ENCODE measurements at regions of chr9 and their contacts with region 1.

Region 1: GRCh38 chr9:32384364-32385151 is at the start of gene ACO1:
- DNase-seq: no peak
- H3K4me3 ChIP-seq: peak within 1 kb of the TSS; percentile 87
- H3K27me3 ChIP-seq: no peaks in the 10 kb centered on the region; the same call in 1 of the 2 replicates
- CTCF ChIP-seq: peak; percentile 14; the same call in 1 of the 2 replicates
- polyA plus RNA-seq, gene ACO1: 93.8 and 111 TPM in 2 replicates

Region 2: DNA sequence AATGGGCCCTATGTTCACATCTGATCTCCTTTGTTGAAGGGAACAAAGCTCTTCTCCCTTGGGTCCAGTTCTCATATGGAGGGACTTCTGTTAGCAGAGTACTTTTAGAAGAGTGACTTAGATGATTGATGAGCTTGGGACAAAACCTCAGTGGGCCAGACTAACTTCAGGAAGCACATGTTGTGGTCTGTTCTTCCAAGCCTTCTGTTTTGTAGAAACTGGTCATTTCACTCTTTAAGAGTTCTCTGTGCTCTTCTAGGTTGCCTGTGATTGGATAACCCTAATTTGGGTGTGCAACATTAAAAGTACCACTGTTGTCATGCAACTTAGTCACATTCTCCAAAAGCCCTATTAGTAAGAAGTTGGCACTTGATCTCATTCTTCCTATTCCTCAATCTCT is 183.7 kb before region 1 on chr9:
- CTCF ChIA-PET with region 1: no interaction called
- POLR2A ChIA-PET with region 1: no interaction called
- DNase-seq: no peak
- H3K4me3 ChIP-seq: no peak overlapping the region
- H3K27me3 ChIP-seq: no peaks in the 10 kb centered on the region
- CTCF ChIP-seq: no peak

Region 3: DNA sequence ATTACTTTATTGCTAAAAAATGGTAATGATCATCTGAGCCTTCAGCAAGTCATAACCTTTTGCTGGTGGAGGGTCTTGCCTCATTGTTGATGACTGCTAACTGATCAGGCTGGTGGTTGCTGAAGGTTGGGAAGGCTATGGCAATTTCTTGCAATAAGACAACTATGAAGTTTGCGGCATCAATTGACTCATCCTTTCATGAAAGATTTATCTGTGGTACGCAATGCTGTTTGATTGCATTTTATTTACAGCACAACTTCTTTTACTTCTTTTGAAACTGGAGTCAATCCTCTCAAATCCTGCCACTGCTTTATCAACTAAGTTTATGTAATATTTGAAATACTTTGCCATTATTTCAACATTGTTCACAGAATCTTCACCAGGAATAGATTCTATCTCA is 58.4 kb before region 1 on chr9:
- CTCF ChIA-PET with region 1: no interaction called
- POLR2A ChIA-PET with region 1: no interaction called
- DNase-seq: no peak
- H3K4me3 ChIP-seq: no peak overlapping the region
- H3K27me3 ChIP-seq: no peaks in the 10 kb centered on the region
- CTCF ChIP-seq: no peak

Region 4: GRCh38 chr9:32395490-32396216 is 11.1 kb after region 1 on chr9:
- CTCF ChIA-PET with region 1: interaction called, 17 read pairs
- POLR2A ChIA-PET with region 1: interaction called, 14 read pairs
- DNase-seq: peak; percentile 80
- H3K4me3 ChIP-seq: no peak overlapping the region
- H3K27me3 ChIP-seq: no peaks in the 10 kb centered on the region
- CTCF ChIP-seq: peak; percentile 58

Region 5: DNA sequence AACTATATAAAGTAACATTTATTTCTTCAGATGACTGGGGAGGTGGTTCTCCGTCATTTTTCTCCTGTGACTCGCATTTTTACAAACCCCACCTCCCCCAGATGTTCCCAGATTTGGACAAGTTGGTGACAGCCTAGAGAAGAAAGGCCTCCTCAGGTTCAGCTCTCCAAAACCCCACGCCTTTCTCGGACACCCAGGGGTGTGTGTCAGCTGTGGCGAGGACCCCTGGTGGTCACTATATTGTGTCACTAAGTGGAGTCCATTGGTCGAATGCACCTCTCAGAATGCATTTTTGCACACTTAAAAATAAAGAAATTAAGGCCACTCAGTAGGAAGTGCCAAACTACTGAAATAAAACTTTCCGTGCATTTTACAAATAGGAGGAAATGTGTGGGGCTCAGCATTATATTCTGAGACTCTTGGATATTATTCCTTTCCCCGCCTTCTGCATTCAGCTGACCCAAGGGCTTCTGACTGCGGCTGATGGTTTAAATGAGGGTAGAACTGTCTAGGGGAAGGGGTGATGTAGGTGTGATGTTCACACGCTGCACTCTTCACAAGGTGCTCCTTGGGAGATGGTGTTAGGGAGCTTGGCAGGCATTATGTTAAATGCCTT is 47.5 kb after region 1 on chr9:
- CTCF ChIA-PET with region 1: interaction called, 171 read pairs
- POLR2A ChIA-PET with region 1: interaction called, 3 read pairs
- DNase-seq: no peak
- H3K4me3 ChIP-seq: no peak overlapping the region
- H3K27me3 ChIP-seq: no peaks in the 10 kb centered on the region
- CTCF ChIP-seq: peak; percentile 64

Region 6: DNA sequence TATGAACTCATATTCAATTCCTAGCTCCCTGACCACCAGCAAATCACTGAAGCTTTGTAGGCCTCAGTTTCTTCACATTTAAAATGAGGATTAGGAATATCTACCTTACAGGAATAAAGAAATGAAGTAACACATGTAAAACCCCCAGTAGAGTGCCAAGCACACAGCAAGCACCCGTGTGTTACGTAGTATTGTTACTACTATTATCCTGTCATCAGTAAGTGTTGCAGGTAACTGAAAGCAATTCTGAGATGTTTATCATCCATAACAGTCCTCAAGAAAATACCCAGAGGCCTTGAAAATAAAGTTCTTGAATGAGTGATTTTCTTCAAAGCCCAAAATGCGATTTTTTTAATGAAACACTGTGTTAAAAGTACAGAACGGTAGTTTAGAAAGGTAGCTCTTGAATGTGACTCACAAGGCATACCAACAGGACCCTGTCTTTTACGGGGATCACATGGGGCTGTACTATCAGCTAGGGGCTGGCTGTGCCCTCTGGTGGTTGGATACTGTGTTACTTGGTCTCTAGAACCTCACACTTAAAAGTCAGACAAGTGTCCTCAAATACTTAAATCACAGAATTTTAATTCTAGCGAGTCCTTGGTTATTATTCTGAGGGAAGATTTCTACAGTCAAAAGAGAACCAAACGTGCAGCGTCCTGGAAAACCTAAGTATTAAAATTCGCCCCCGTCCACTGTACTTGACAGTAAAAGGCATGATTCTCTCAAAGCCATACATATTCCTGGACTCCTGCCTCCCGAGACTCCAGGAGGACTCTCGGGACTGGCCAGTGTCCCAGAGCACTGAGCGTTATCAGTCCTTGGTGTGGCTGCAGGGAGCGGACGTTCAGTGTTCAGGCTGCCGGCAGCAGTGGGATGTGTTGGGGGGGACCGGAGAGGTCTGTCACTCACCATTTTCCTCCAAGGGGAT is 187.7 kb after region 1 on chr9:
- CTCF ChIA-PET with region 1: interaction called, 492 read pairs
- POLR2A ChIA-PET with region 1: interaction called, 3 read pairs
- DNase-seq: no peak
- H3K4me3 ChIP-seq: peak overlapping the region; percentile 93
- H3K27me3 ChIP-seq: no peaks in the 10 kb centered on the region
- CTCF ChIP-seq: peak; percentile 75

Measured in BJ (cell line).